Aorta (tissue), 5 donors: ENCODE measurements at regions of chr11 and their contacts with region 1.

Region 1: DNA sequence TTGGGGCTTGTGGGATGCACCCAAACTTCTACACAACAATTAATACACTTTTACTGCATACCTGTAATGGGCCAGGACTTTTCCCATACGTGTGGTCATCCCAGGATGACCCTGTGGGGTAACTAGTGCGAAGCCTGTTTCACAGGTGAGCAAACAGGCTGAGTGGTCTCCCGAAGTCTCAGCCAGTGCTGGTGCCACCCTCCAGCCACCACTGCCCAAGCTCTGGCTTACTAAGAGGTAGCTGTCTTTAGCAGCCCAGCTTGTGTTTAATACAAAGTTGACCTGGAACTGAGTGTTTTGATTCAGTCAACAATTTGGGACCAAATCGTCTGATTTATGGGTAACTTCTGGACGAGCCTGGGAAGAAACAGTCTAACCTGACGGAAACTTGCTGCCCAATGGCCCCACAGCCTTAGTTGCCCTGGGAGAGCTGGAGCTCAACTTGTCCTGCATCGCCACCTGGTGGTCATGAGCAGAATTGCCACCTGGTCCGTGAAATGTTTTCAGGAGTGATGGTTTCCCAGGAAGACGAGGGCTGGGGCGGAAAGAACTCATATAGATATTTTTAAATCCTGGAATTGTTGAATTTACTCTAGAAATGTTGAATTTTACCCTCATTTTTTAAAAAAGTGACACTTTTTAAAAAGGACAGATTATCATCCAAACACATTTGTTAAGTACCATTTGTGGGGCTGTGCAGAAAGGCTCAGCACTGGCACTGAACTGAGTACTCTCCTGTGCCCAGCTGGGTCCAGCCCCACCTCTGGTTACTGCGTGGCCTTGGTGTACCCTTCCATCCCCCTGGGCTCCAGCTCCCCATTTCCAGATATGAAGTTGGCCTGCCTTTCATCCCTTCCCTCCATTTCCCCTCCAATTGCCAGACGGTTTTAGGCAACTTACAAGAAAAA is 95.5 kb upstream of the PARVA start:
- DNase-seq: peak; percentile 86 to 94
- ATAC-seq: peak; percentile 84
- H3K4me3 ChIP-seq: no peak overlapping the region
- H3K27ac ChIP-seq: no peak overlapping the region
- H3K4me1 ChIP-seq: no peaks in the 10 kb centered on the region
- H3K27me3 ChIP-seq: no peaks in the 10 kb centered on the region

Region 2: DNA sequence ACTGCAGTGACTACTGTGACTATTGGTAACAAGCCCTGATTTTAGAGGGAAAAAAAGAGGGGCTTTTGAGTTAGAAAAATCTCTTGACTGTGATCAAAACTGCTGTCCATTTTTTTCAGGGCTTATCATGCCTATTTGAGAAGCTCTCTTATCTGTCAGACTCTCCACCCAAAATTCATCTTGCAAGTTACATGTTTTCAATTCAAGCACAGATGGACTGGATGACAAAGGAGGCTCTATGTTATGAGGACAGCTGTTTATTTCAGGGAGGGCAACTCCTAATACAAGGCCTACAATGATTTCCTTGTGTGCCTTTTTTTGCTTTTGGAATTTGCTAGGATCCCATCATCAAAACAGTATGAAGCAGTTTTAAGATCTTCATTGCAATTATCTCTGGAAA is 475.2 kb before region 1 on chr11:
- intact Hi-C with region 1: loop called in 1 of 2 experiments (anchors 10 kb)
- DNase-seq: no peak
- ATAC-seq: no peak
- H3K4me3 ChIP-seq: no peak overlapping the region
- H3K27ac ChIP-seq: no peak overlapping the region
- H3K4me1 ChIP-seq: no peaks in the 10 kb centered on the region
- H3K27me3 ChIP-seq: no peaks in the 10 kb centered on the region

Region 3: DNA sequence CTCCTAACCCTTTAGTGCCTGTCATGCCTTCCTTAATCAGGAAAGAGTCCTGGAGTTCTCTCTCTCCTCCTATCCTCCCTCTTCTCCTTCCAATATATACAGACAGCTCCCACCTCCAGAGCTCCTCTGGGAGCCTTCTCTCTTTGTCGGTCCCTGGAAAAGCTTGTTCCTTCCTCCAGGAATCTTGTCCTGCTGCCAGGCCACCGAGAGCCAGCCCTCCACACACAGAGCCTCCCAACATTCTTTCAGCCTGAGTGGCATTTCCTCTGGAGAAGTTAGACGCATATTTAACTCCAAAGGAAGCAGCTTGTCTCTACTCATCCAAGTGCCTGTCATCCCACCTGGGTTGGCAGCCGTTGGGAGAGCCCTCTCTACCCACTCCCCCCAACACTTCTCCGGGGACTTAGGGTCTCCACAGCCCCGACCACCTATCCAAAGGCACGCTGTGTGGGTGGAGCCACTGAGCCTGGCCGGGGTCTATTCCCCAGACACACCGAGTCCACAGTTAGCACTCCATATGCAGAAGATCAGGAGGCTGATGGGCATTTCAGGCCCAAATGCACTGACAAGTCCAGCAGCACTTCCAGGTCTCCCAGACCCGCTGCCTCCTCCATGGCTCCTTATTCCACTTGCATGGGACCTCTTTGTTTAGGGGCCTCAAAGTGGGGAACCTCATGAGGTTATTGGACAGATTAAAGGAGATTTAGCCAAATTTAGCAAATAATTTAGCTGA is 304.5 kb before region 1 on chr11:
- intact Hi-C with region 1: loop called in 1 of 2 experiments (anchors 5 kb)
- DNase-seq: peak; percentile 87 to 91
- ATAC-seq: peak; percentile 36
- H3K4me3 ChIP-seq: no peak overlapping the region
- H3K27ac ChIP-seq: peak overlapping the region; percentile 57 to 83
- H3K4me1 ChIP-seq: peaks cover 0 to 16% of the 10 kb centered on the region in 2 donors
- H3K27me3 ChIP-seq: no peaks in the 10 kb centered on the region

Region 4: GRCh38 chr11:12087075-12088004 is 194.5 kb before region 1 on chr11:
- intact Hi-C with region 1: loop called in 1 of 2 experiments (anchors 5 kb)
- DNase-seq: peak; percentile 71 to 80
- ATAC-seq: peak; percentile 60
- H3K4me3 ChIP-seq: peak overlapping the region; percentile 30 to 68
- H3K27ac ChIP-seq: peak overlapping the region; percentile 100
- H3K4me1 ChIP-seq: peaks cover 0 to 9% of the 10 kb centered on the region in 2 donors
- H3K27me3 ChIP-seq: no peaks in the 10 kb centered on the region

Region 5: DNA sequence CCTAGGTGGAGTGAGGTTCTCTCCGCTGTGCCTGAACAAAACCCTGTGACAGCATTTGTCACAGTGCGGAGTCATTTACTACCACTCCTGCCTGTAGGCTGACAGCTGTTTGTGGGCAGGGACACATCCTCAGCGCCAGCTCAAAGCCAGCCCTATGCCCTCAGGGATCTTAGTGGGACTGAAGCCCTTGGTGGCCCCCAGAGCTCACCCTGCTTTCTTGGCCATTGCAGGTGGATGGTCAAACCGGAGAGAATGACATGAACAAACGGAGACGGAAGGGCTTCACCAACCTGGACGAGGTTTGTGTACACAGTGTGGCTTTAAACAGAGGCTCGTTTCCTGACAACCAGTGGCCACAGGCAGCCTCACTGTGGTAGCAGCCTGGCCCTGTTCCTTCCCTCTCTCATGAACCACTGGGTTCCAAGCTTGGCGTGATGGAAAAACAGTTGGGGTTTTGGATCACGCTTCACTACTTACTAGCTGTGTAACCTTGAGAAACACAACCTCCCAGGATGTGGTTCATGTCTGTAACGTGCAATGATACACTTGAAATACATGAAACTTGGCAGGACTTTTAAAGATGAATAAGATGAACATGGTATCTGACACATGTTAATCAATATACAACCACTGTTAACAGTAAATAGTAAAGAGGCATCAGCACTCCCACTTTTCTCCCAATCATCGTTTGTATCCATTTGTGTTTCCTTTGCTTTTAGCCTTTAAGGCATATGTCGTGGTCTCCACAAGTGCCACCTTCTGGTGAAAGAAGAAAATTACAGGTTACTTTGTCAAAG is 45.7 kb before region 1 on chr11:
- intact Hi-C with region 1: loop called (anchors 5 kb)
- DNase-seq: peak in 1 of 2 donors; percentile 68
- ATAC-seq: peak; percentile 53
- H3K4me3 ChIP-seq: no peak overlapping the region
- H3K27ac ChIP-seq: peak overlapping the region; percentile 98 to 99
- H3K4me1 ChIP-seq: peaks cover 3 to 7% of the 10 kb centered on the region in 2 donors
- H3K27me3 ChIP-seq: no peaks in the 10 kb centered on the region

Region 6: GRCh38 chr11:12356944-12357650 is 75.3 kb after region 1 on chr11:
- intact Hi-C with region 1: no loop called
- DNase-seq: no peak
- ATAC-seq: no peak
- H3K4me3 ChIP-seq: no peak overlapping the region
- H3K27ac ChIP-seq: no peak overlapping the region
- H3K4me1 ChIP-seq: no peaks in the 10 kb centered on the region
- H3K27me3 ChIP-seq: no peaks in the 10 kb centered on the region

Region 7: GRCh38 chr11:12540913-12541582 is 259.2 kb after region 1 on chr11:
- intact Hi-C with region 1: no loop called
- DNase-seq: no peak
- ATAC-seq: peak; percentile 21
- H3K4me3 ChIP-seq: no peak overlapping the region
- H3K27ac ChIP-seq: peak overlapping the region in 1 of 2 donors; percentile 37
- H3K4me1 ChIP-seq: peaks cover 0 to 4% of the 10 kb centered on the region in 2 donors
- H3K27me3 ChIP-seq: no peaks in the 10 kb centered on the region